ENCODE measurements at regions of chr11 and their contacts with region 1.

Region 1: DNA sequence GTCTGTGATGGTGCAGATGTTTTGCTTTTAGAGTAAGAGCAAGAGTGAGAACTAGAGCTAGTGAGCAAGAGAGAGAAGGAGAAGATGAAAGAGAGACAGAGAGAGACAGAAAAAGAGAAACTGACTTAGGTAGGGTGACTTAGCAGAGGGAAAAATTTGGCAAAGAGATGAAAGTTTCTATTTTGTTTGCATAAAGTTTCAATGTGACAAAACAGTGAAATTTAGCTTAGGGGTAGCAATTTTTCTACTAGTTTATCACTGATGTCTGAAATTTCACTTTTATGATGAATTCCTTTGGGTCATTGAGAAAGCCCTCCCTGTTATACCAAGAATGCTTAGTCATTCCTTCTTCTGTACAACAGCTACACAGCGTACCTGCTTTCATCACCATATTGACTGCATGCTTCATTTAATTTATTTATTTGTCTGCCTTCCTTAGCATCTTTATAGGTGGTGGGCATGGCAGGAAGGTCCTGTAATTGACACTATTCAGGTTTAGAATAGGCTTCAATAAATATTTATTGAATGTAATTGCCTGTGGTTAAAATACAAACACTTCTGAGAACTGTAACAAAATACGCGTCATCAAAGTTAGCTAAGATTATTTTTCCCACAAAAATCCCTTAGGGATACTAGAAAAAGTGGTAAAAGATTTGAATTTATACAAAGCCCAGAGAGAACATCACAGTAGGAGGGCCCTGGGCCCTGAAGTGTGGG is 19.9 kb upstream of the CTSC start:
- DNase-seq: peak; percentile 79
- ATAC-seq: peak; percentile 62
- H3K4me3 ChIP-seq: peak overlapping the region; percentile 23; the same call in 1 of the 2 replicates
- H3K27ac ChIP-seq: peak overlapping the region; percentile 89
- H3K4me1 ChIP-seq: peaks cover 53% of the 10 kb centered on the region
- H3K27me3 ChIP-seq: no peaks in the 10 kb centered on the region
- CTCF ChIP-seq: no peak
- EP300 ChIP-seq: peak; percentile 63 to 78
- POLR2A ChIP-seq: no peak
- RAD21 ChIP-seq: no peak

Region 2: GRCh38 chr11:87870086-87870485 is 487.4 kb before region 1 on chr11:
- CTCF ChIA-PET with region 1: no interaction called
- POLR2A ChIA-PET with region 1: no interaction called
- RAD21 ChIA-PET with region 1: no interaction called
- SMC1A ChIA-PET with region 1: no interaction called
- in situ Hi-C with region 1: no loop called
- intact Hi-C with region 1: no loop called
- DNase-seq: no peak
- ATAC-seq: no peak
- H3K4me3 ChIP-seq: no peak overlapping the region
- H3K27ac ChIP-seq: no peak overlapping the region
- H3K4me1 ChIP-seq: no peaks in the 10 kb centered on the region
- H3K27me3 ChIP-seq: no peaks in the 10 kb centered on the region
- CTCF ChIP-seq: no peak
- EP300 ChIP-seq: no peak
- POLR2A ChIP-seq: no peak
- RAD21 ChIP-seq: no peak

Region 3: DNA sequence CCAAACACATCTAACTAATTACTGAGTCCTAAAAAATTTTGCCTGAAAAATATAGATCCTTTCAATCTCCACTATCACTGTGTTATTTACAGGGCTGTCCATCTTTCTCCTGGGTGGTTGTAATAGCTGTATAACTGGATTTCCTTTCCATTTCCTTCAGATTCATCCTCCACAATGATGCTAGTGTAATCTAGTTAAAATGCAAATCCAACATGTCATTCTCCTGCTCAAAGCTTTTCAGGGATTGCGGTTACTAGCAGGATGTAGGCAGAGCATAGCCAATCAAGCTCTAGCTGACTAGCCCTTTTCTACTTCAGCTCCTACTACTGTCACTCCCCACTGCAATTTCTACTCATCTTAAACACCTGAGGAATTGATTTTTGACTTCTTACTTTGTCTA is 465.2 kb before region 1 on chr11:
- CTCF ChIA-PET with region 1: no interaction called
- POLR2A ChIA-PET with region 1: no interaction called
- RAD21 ChIA-PET with region 1: no interaction called
- SMC1A ChIA-PET with region 1: no interaction called
- in situ Hi-C with region 1: no loop called
- intact Hi-C with region 1: no loop called
- DNase-seq: no peak
- ATAC-seq: no peak
- H3K4me3 ChIP-seq: no peak overlapping the region
- H3K27ac ChIP-seq: no peak overlapping the region
- H3K4me1 ChIP-seq: no peaks in the 10 kb centered on the region
- H3K27me3 ChIP-seq: peaks cover 0 to 3% of the 10 kb centered on the region in 2 experiments; a peak in 1 of 4 replicates
- CTCF ChIP-seq: no peak
- EP300 ChIP-seq: no peak
- POLR2A ChIP-seq: no peak
- RAD21 ChIP-seq: no peak

Region 4: DNA sequence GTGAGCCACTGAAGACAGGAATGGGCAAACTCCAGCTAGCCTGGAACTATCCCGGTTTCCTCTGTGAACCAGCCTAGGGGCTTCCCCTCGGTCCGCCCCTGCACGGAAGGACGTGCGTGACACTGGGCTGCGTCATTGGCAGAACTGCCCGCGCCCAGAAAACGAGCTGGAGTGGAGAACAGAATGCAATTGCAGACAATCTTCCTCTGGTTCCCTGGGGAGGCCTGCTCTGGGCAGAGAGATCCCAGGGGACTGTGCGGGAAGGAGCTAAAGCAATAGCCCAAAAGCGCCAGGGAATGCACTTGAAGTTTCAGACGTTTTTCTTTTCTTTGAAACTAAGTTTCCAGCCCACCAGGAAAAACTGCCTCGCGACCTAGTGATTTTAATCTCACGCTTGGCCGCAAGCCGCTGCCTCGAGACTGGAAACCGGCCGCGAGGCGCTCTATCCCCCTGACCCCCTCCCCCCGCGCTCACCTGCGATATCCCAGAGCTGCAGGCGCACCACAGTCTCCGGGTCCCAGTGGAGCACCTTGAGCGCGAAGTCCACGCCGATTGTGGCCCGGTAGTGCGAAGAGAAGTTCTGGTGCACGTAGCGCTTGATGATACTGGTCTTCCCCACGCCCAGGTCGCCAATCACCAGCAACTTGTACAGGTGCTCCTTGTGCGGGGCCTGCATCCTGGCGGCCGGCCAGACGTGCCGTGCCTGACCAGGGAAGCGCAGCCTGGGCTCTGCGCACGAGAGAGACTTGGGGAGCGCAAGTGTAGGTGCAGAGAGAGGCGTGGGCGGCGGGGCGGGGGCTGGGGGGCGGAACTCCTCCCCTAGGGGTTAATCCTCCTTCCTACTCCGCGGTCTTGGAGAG is 182.5 kb before region 1 on chr11 and contains the start of gene RAB38:
- CTCF ChIA-PET with region 1: no interaction called
- POLR2A ChIA-PET with region 1: no interaction called
- RAD21 ChIA-PET with region 1: interaction called, 3 read pairs
- SMC1A ChIA-PET with region 1: interaction called, 4 read pairs
- in situ Hi-C with region 1: no loop called
- intact Hi-C with region 1: loop called (anchors 5 kb)
- DNase-seq: no peak
- ATAC-seq: peak; percentile 71
- H3K4me3 ChIP-seq: peak within 1 kb of the TSS; percentile 72
- H3K27ac ChIP-seq: no peak within 1 kb of the TSS
- H3K4me1 ChIP-seq: peaks cover 23% of the 10 kb centered on the region
- H3K27me3 ChIP-seq: no peaks in the 10 kb centered on the region
- CTCF ChIP-seq: no peak
- EP300 ChIP-seq: peak in 1 of 2 experiments; percentile 5; a peak in 1 of 4 replicates
- POLR2A ChIP-seq: peak; percentile 46; the same call in 1 of the 2 replicates
- RAD21 ChIP-seq: no peak
- polyA plus RNA-seq, gene RAB38: 12.3 to 19.0 TPM

Region 5: GRCh38 chr11:88307749-88308425 is 49.6 kb before region 1 on chr11:
- CTCF ChIA-PET with region 1: interaction called, 12 read pairs
- POLR2A ChIA-PET with region 1: interaction called, 28 read pairs
- RAD21 ChIA-PET with region 1: interaction called, 143 read pairs
- SMC1A ChIA-PET with region 1: interaction called, 135 read pairs
- in situ Hi-C with region 1: loop called (anchors 5 kb)
- intact Hi-C with region 1: no loop called
- DNase-seq: peak; percentile 81
- ATAC-seq: peak; percentile 78
- H3K4me3 ChIP-seq: peak overlapping the region; percentile 6; the same call in 1 of the 2 replicates
- H3K27ac ChIP-seq: peak overlapping the region; percentile 75
- H3K4me1 ChIP-seq: peaks cover 33% of the 10 kb centered on the region
- H3K27me3 ChIP-seq: no peaks in the 10 kb centered on the region
- CTCF ChIP-seq: no peak
- EP300 ChIP-seq: peak; percentile 47 to 76; a peak in 3 of 4 replicates
- POLR2A ChIP-seq: no peak
- RAD21 ChIP-seq: no peak

Region 6: DNA sequence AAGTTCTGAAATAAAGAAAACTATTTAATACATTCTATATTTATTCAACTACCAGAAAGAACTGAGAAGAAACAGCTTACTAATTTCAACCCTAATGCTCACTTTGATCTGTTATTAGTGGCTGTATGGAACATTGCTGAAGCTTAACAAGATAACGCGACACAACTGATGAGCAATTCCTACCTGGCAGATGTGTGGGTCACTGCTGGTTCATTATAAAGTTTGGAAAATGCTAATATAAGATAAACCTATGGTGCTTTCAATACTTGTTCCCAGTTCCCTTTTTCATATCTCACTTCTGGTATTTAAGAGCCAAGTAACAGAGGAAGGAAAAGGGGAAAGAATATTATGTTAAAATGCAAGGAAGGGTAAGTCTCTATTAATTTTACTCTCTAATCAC is 30.4 kb before region 1 on chr11:
- CTCF ChIA-PET with region 1: interaction called, 42 read pairs
- POLR2A ChIA-PET with region 1: interaction called, 68 read pairs
- RAD21 ChIA-PET with region 1: interaction called, 299 read pairs
- SMC1A ChIA-PET with region 1: interaction called, 171 read pairs
- in situ Hi-C with region 1: no loop called
- intact Hi-C with region 1: no loop called
- DNase-seq: no peak
- ATAC-seq: peak; percentile 44
- H3K4me3 ChIP-seq: peak overlapping the region; percentile 23; the same call in 1 of the 2 replicates
- H3K27ac ChIP-seq: peak overlapping the region; percentile 67; the same call in 1 of the 2 replicates
- H3K4me1 ChIP-seq: peaks cover 42% of the 10 kb centered on the region
- H3K27me3 ChIP-seq: no peaks in the 10 kb centered on the region
- CTCF ChIP-seq: no peak
- EP300 ChIP-seq: peak; percentile 46 to 80; a peak in 1 of 4 replicates
- POLR2A ChIP-seq: no peak
- RAD21 ChIP-seq: no peak

Region 7: GRCh38 chr11:88345408-88345807 is 12.1 kb before region 1 on chr11:
- CTCF ChIA-PET with region 1: interaction called, 21 read pairs
- POLR2A ChIA-PET with region 1: interaction called, 116 read pairs
- RAD21 ChIA-PET with region 1: interaction called, 15 read pairs
- SMC1A ChIA-PET with region 1: interaction called, 42 read pairs
- in situ Hi-C with region 1: no loop called
- intact Hi-C with region 1: no loop called
- DNase-seq: no peak
- ATAC-seq: peak; percentile 75
- H3K4me3 ChIP-seq: no peak overlapping the region
- H3K27ac ChIP-seq: no peak overlapping the region
- H3K4me1 ChIP-seq: peaks cover 18% of the 10 kb centered on the region
- H3K27me3 ChIP-seq: no peaks in the 10 kb centered on the region
- CTCF ChIP-seq: no peak
- EP300 ChIP-seq: no peak
- POLR2A ChIP-seq: no peak
- RAD21 ChIP-seq: no peak

Region 8: DNA sequence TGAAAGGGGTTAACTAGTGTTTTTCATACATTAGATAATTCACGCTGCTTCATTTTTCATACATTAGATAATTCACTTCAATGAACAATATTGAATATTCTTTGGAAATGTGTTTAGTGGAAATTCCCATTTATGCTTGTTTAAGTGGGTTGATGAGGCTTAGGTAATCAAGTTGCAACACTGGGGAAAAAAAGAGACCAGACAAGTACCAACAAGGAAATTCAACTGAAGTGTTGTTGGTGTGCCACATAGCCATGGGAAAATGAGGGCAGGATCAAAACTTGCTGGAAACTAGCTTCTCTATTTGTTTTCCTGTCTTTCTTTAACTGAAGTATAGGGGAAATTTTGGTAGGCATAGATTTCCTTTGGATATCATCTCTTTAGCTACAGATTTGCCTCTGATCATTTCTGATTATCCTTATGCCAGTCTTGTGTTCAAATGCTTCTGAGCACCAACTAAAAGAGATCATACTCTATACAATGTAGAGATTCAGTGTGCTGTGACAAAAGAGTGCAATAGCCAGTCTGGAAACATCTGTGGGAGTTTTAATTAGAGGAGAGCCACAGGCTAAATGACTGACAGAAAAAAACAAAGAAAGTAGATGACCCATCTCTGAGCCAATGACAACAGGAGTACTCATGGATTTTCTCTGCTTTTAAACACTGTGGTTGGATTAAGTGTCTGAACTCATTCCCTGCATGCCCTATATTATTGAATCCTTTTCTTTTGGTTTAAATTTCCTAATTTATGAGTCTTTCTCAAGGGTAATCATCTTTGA is 47.6 kb after region 1 on chr11:
- CTCF ChIA-PET with region 1: no interaction called
- POLR2A ChIA-PET with region 1: no interaction called
- RAD21 ChIA-PET with region 1: no interaction called
- SMC1A ChIA-PET with region 1: no interaction called
- in situ Hi-C with region 1: no loop called
- intact Hi-C with region 1: no loop called
- DNase-seq: no peak
- ATAC-seq: no peak
- H3K4me3 ChIP-seq: peak overlapping the region; percentile 1; the same call in 1 of the 2 replicates
- H3K27ac ChIP-seq: no peak overlapping the region
- H3K4me1 ChIP-seq: peaks cover 3% of the 10 kb centered on the region; the same call in 1 of the 2 replicates
- H3K27me3 ChIP-seq: no peaks in the 10 kb centered on the region; a peak in 1 of 4 replicates
- CTCF ChIP-seq: no peak
- EP300 ChIP-seq: no peak
- POLR2A ChIP-seq: no peak
- RAD21 ChIP-seq: no peak

Region 9: GRCh38 chr11:88435189-88435814 is 77.8 kb after region 1 on chr11:
- CTCF ChIA-PET with region 1: interaction called, 13 read pairs
- POLR2A ChIA-PET with region 1: interaction called, 4 read pairs
- RAD21 ChIA-PET with region 1: interaction called, 15 read pairs
- SMC1A ChIA-PET with region 1: interaction called, 13 read pairs
- in situ Hi-C with region 1: no loop called
- intact Hi-C with region 1: loop called (anchors 1 kb)
- DNase-seq: peak; percentile 77
- ATAC-seq: peak; percentile 97
- H3K4me3 ChIP-seq: no peak overlapping the region
- H3K27ac ChIP-seq: peak overlapping the region; percentile 90
- H3K4me1 ChIP-seq: peaks cover 26% of the 10 kb centered on the region
- H3K27me3 ChIP-seq: no peaks in the 10 kb centered on the region
- CTCF ChIP-seq: no peak
- EP300 ChIP-seq: peak; percentile 52; a peak in 2 of 4 replicates
- POLR2A ChIP-seq: no peak
- RAD21 ChIP-seq: peak; percentile 30

Measured in GM12878 (cell line).